Activated CD8-positive, alpha-beta T cell treated with anti-CD3 and anti-CD28 coated beads for 36 hours (primary cell): ENCODE measurements at regions of chr5 and their contacts with region 1.

Region 1: GRCh38 chr5:138352071-138352721 is at the start of gene KDM3B:
- DNase-seq: peak; percentile 88
- ATAC-seq: peak; percentile 91
- H3K4me3 Mint-ChIP-seq: peak within 1 kb of the TSS; percentile 92
- H3K27ac Mint-ChIP-seq: peak within 1 kb of the TSS; percentile 91
- H3K4me1 Mint-ChIP-seq: peaks cover 45% of the 10 kb centered on the region
- H3K27me3 Mint-ChIP-seq: no peaks in the 10 kb centered on the region
- CTCF ChIP-seq: peak; percentile 99
- total RNA-seq, gene KDM3B: 41.6 to 41.9 TPM

Region 2: GRCh38 chr5:138192826-138193225 is 159.4 kb before region 1 on chr5:
- CTCF ChIA-PET with region 1: interaction called, 14 read pairs
- POLR2A ChIA-PET with region 1: no interaction called
- intact Hi-C with region 1: no loop called
- DNase-seq: no peak
- ATAC-seq: no peak
- H3K4me3 Mint-ChIP-seq: no peak overlapping the region
- H3K27ac Mint-ChIP-seq: no peak overlapping the region
- H3K4me1 Mint-ChIP-seq: no peaks in the 10 kb centered on the region
- H3K27me3 Mint-ChIP-seq: no peaks in the 10 kb centered on the region
- CTCF ChIP-seq: no peak

Region 3: DNA sequence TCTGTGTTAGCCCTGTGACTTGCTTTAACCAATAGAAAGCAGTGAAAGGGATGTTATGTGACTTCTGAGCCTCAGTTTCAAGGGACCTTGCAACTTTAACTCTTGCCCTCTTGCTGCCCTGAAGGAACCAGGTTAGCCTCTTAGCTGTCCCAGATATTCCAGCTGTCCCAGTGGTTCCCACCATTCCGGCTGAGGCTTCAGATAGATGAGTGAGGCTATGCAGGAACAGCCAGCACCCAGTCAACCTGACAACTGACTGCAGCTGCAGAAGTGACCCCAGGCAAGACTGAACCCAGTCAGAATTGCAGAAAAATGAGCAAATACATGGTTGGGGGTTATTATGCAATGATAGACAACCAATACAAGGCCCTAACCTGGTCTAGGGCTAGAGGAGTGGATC is 128.7 kb before region 1 on chr5:
- CTCF ChIA-PET with region 1: interaction called, 14 read pairs
- POLR2A ChIA-PET with region 1: no interaction called
- intact Hi-C with region 1: no loop called
- DNase-seq: no peak
- ATAC-seq: no peak
- H3K4me3 Mint-ChIP-seq: no peak overlapping the region
- H3K27ac Mint-ChIP-seq: no peak overlapping the region
- H3K4me1 Mint-ChIP-seq: no peaks in the 10 kb centered on the region
- H3K27me3 Mint-ChIP-seq: peaks cover 11% of the 10 kb centered on the region
- CTCF ChIP-seq: no peak

Region 4: GRCh38 chr5:138252944-138253343 is 99.3 kb before region 1 on chr5:
- CTCF ChIA-PET with region 1: no interaction called
- POLR2A ChIA-PET with region 1: no interaction called
- intact Hi-C with region 1: no loop called
- DNase-seq: no peak
- ATAC-seq: no peak
- H3K4me3 Mint-ChIP-seq: no peak overlapping the region
- H3K27ac Mint-ChIP-seq: no peak overlapping the region
- H3K4me1 Mint-ChIP-seq: no peaks in the 10 kb centered on the region
- H3K27me3 Mint-ChIP-seq: no peaks in the 10 kb centered on the region
- CTCF ChIP-seq: no peak

Region 5: GRCh38 chr5:138337685-138338410 is 14.3 kb before region 1 on chr5 and contains the start of gene FAM53C:
- CTCF ChIA-PET with region 1: interaction called, 322 read pairs
- POLR2A ChIA-PET with region 1: interaction called, 156 read pairs
- intact Hi-C with region 1: no loop called
- DNase-seq: peak; percentile 92
- ATAC-seq: peak; percentile 89
- H3K4me3 Mint-ChIP-seq: peak within 1 kb of the TSS; percentile 91
- H3K27ac Mint-ChIP-seq: peak within 1 kb of the TSS; percentile 96
- H3K4me1 Mint-ChIP-seq: peaks cover 28% of the 10 kb centered on the region
- H3K27me3 Mint-ChIP-seq: no peaks in the 10 kb centered on the region
- CTCF ChIP-seq: no peak
- total RNA-seq, gene FAM53C: 25.8 to 29.1 TPM

Region 6: GRCh38 chr5:138402640-138403039 is 50.4 kb after region 1 on chr5:
- CTCF ChIA-PET with region 1: interaction called, 70 read pairs
- POLR2A ChIA-PET with region 1: interaction called, 6 read pairs
- intact Hi-C with region 1: no loop called
- DNase-seq: no peak
- ATAC-seq: peak; percentile 94
- H3K4me3 Mint-ChIP-seq: no peak overlapping the region
- H3K27ac Mint-ChIP-seq: peak overlapping the region; percentile 11
- H3K4me1 Mint-ChIP-seq: peaks cover 19% of the 10 kb centered on the region
- H3K27me3 Mint-ChIP-seq: no peaks in the 10 kb centered on the region
- CTCF ChIP-seq: no peak

Region 7: DNA sequence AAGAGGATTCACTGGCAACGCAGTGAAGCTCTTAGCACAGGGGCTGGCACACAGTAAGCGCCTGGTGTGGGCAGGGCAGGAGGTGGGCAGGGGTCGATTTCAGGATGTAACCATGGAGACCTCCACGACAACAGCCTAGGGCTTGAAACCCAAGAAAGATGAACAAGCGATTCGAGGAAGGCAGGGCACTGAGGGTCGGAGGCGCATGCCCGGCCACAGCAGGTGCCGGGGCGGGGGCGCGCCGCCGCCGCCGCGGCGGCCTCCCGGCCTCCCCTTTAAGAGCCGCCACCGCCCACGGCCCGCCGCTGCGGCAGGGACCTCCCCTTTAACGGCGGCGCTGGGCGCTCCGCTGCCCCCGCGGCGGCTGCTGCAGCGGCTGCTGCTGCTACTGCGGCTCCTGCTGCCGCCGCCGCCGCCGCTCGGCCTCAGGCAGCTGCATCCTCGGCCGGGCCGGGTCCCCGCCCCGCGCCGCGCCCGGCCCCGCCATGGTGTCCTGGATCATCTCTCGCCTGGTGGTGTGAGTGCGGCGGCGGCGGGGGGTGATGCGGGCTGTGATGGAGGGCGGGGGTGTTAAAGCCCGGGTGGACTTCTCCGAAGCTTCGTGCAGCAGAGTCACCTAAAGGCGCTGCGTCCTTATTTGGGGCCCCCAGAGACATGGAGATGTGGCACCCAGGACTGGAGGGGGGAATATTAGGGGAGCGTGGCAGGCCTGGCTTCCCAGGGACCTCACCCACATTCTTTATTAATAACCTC is 86.7 kb after region 1 on chr5 and contains the start of gene REEP2:
- CTCF ChIA-PET with region 1: interaction called, 12 read pairs
- POLR2A ChIA-PET with region 1: interaction called, 3 read pairs
- intact Hi-C with region 1: no loop called
- DNase-seq: peak; percentile 81
- ATAC-seq: peak; percentile 92
- H3K4me3 Mint-ChIP-seq: peak within 1 kb of the TSS; percentile 73
- H3K27ac Mint-ChIP-seq: no peak within 1 kb of the TSS
- H3K4me1 Mint-ChIP-seq: peaks cover 12% of the 10 kb centered on the region
- H3K27me3 Mint-ChIP-seq: no peaks in the 10 kb centered on the region
- CTCF ChIP-seq: no peak
- total RNA-seq, gene REEP2: 2.9 to 3.1 TPM

Region 8: DNA sequence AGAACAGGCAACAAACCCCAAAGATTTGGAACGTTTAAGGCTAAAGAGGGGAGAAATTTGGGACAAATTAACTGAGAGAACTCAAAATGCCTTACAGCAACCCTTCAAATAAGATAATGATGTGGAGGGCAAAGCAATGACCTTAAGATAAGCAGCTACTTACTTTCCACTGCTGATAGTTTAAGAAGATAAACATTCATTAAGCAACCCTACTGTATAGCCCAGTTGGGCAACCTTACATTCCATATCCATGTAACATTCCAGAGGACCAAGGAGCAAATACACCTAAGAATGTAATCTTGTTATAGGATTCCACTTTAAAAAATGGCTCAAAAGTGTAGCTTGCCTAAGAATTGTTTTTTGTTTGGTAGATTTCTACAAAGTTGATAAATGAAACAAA is 176.0 kb after region 1 on chr5:
- CTCF ChIA-PET with region 1: no interaction called
- POLR2A ChIA-PET with region 1: no interaction called
- intact Hi-C with region 1: no loop called
- DNase-seq: no peak
- ATAC-seq: no peak
- H3K4me3 Mint-ChIP-seq: no peak overlapping the region
- H3K27ac Mint-ChIP-seq: no peak overlapping the region
- H3K4me1 Mint-ChIP-seq: peaks cover 41% of the 10 kb centered on the region
- H3K27me3 Mint-ChIP-seq: no peaks in the 10 kb centered on the region
- CTCF ChIP-seq: no peak

Region 9: DNA sequence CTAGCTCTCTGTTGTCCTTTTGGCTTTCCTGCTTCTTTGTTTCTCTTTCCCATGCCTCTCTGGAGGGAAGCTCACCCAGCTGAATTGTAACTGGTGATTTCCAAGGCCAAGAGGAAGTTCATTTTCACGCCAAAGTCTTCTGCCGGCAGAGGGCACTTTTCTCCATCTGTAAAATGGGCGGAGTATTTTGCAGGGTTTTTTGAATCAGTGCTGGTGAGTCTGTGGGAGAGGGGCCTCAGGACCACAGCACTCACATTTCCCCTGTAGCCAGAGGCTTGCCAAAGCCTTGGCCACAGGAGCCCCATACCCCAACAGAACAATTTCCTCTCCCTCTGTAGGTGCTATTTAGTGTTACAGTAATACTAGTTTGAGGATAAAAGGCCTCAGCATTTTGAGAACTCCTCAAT is 899.1 kb after region 1 on chr5:
- CTCF ChIA-PET with region 1: no interaction called
- POLR2A ChIA-PET with region 1: no interaction called
- intact Hi-C with region 1: no loop called
- DNase-seq: peak; percentile 68
- ATAC-seq: no peak
- H3K4me3 Mint-ChIP-seq: no peak overlapping the region
- H3K27ac Mint-ChIP-seq: no peak overlapping the region
- H3K4me1 Mint-ChIP-seq: peaks cover 15% of the 10 kb centered on the region
- H3K27me3 Mint-ChIP-seq: no peaks in the 10 kb centered on the region
- CTCF ChIP-seq: peak; percentile 53